Posterior cingulate gyrus (tissue), 11 donors: ENCODE measurements at regions of chr5 and their contacts with region 1.

Region 1: GRCh38 chr5:154603978-154604679 is 126.1 kb upstream of the HAND1 start:
- DNase-seq: no peak

Region 2: GRCh38 chr5:154072414-154073171 is 531.5 kb before region 1 on chr5:
- intact Hi-C with region 1: loop called (anchors 10 kb)
- DNase-seq: peak; percentile 64 to 97 (median 88)

Region 3: GRCh38 chr5:154505611-154506010 is 98.5 kb before region 1 on chr5:
- intact Hi-C with region 1: no loop called
- DNase-seq: no peak